ENCODE measurements at regions of chr17 and their contacts with region 1.

Region 1: GRCh38 chr17:59837308-59838051 is 55.3 kb downstream of the TUBD1 start:
- DNase-seq: peak; percentile 75
- H3K4me3 Mint-ChIP-seq: peak overlapping the region; percentile 98
- H3K27ac Mint-ChIP-seq: peak overlapping the region; percentile 100
- H3K4me1 Mint-ChIP-seq: peaks cover 50% of the 10 kb centered on the region
- H3K27me3 Mint-ChIP-seq: peaks cover 26% of the 10 kb centered on the region

Region 2: DNA sequence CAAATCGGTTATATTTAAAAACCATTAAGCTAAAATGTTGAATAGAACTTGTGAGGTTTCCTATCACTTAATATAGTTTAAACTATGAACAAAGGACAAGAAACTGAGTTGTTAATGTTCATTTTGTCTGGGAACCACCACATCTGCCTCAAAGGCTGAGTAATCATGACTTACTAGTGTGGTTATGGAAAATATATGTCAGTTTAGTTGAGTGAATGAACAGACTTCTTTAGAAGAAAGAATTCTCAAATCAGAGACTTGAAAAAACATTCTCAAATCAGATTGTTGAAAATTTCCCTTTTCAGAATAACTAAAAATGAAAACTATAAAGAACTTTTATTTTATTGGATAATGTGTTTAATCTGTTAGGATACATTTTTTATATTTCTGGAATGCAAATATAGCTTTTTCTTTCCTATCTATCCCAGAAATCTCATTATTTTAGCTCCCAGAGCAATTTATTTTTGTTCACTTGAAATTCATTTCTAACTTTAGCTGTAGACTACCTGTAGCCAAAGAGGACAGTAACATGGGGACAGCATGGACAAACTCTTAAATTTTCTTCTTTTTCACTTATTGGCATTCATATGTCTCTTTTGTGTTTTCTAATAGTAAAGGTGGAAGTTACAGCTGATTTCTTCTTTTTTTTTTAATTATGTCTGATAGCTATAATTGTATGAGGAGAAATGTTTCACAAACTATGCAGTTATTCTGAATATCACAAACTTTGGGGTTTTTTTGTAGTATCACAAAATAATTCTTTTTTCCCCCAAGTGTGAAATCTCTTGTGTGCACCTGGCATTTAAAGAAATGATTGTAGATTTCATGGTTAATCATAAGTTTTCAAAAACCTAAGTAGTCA is 74.7 kb before region 1 on chr17:
- CTCF ChIA-PET with region 1: interaction called, 3 read pairs
- POLR2A ChIA-PET with region 1: interaction called, 242 read pairs
- intact Hi-C with region 1: no loop called
- DNase-seq: peak; percentile 24
- H3K4me3 Mint-ChIP-seq: peak overlapping the region; percentile 48
- H3K27ac Mint-ChIP-seq: peak overlapping the region; percentile 97
- H3K4me1 Mint-ChIP-seq: peaks cover 61% of the 10 kb centered on the region
- H3K27me3 Mint-ChIP-seq: no peaks in the 10 kb centered on the region

Region 3: GRCh38 chr17:59800530-59800942 is 36.9 kb before region 1 on chr17:
- CTCF ChIA-PET with region 1: no interaction called
- POLR2A ChIA-PET with region 1: interaction called, 17 read pairs
- intact Hi-C with region 1: no loop called
- DNase-seq: no peak
- H3K4me3 Mint-ChIP-seq: no peak overlapping the region
- H3K27ac Mint-ChIP-seq: peak overlapping the region; percentile 28
- H3K4me1 Mint-ChIP-seq: peaks cover 30% of the 10 kb centered on the region
- H3K27me3 Mint-ChIP-seq: no peaks in the 10 kb centered on the region

Region 4: GRCh38 chr17:59853168-59853918 is 15.9 kb after region 1 on chr17:
- CTCF ChIA-PET with region 1: interaction called, 10 read pairs
- POLR2A ChIA-PET with region 1: interaction called, 923 read pairs
- intact Hi-C with region 1: no loop called
- DNase-seq: peak; percentile 84
- H3K4me3 Mint-ChIP-seq: peak overlapping the region; percentile 12
- H3K27ac Mint-ChIP-seq: peak overlapping the region; percentile 84
- H3K4me1 Mint-ChIP-seq: peaks cover 48% of the 10 kb centered on the region
- H3K27me3 Mint-ChIP-seq: no peaks in the 10 kb centered on the region

Measured in activated CD4-positive, alpha-beta memory T cell treated with anti-CD3 and anti-CD28 coated beads for 36 hours (primary cell).